Endothelial cell of umbilical vein (primary cell): ENCODE measurements at regions of chr11 and their contacts with region 1.

Region 1: DNA sequence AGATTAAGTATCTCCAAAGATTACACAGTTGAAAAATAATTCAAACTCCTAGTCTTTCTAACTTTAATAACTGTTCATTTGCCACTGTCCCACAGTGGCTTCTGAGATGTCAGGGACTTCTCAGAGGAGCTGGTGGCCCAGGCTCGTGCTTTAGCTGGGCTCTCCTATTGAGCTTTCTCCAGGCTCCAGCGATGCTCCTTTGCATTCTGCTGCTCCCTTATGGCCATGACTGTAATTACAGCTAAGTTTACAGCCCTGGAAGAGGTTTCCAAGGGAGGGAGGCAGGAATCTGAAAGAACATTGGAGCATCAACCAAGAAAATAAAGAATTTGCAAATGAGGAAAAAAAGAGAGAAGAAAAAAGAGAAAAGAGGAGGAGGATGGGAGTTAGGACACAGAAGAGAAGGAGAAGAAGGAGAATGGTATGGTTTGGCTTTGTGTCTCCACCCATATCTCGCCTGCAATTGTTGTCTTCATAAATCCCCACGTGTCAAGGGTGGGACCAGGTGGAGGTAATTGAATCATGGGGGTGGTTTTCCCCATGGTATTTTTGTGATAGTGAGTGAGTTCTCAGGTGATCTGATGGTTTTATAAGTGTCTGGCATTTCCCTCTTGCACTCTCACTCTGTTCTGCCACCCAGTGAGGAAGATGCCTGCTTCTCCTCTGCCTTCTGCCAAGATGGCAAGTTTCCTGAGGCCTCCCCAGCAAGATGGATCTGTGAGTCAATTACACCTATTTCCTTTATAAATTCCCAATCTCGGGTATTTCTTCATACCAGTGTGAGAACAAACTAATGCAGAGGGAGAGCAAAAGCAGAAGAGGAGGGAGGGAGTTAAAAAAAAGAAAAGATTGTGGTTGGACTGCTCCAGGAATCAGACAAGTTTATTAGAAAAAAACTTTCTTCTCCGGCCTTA is 857.0 kb downstream of the KCNA4 start:
- DNase-seq: peak; percentile 82
- H3K4me3 ChIP-seq: no peak overlapping the region
- H3K27ac ChIP-seq: peak overlapping the region; percentile 12
- H3K4me1 ChIP-seq: peaks cover 9% of the 10 kb centered on the region
- H3K27me3 ChIP-seq: no peaks in the 10 kb centered on the region
- CTCF ChIP-seq: peak; percentile 67 to 71
- POLR2A ChIP-seq: no peak

Region 2: DNA sequence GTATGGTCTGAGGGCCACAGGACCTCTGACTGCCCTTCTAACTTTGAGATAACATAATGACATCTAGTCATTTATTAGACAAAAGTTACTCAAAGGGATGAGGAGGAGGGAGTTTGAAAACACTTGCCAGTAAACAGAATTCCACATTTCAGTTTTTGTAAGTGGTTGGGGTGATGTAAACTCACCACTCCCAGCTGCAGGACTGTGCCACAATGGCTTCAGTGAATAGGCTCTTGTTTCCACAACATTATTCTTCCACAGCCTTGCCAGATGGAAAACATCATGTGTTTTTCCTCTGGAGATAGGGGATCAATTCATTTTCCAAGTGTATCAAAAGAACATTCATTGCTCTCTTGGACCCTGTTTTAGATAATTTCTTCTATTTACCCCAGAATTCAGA is 1312.3 kb before region 1 on chr11:
- CTCF ChIA-PET with region 1: no interaction called
- POLR2A ChIA-PET with region 1: no interaction called
- dilution Hi-C with region 1: no loop called
- intact Hi-C with region 1: loop called (anchors 10 kb)
- DNase-seq: no peak
- H3K4me3 ChIP-seq: no peak overlapping the region
- H3K27ac ChIP-seq: no peak overlapping the region
- H3K4me1 ChIP-seq: no peaks in the 10 kb centered on the region
- H3K27me3 ChIP-seq: peaks cover 7 to 10% of the 10 kb centered on the region in 2 experiments
- CTCF ChIP-seq: no peak
- POLR2A ChIP-seq: no peak

Region 3: GRCh38 chr11:28566339-28567089 is 593.3 kb before region 1 on chr11:
- CTCF ChIA-PET with region 1: no interaction called
- POLR2A ChIA-PET with region 1: no interaction called
- dilution Hi-C with region 1: no loop called
- intact Hi-C with region 1: loop called (anchors 10 kb)
- DNase-seq: peak; percentile 92
- H3K4me3 ChIP-seq: peak overlapping the region in 2 of 3 experiments; percentile 28 to 71
- H3K27ac ChIP-seq: peak overlapping the region; percentile 77
- H3K4me1 ChIP-seq: peaks cover 12% of the 10 kb centered on the region
- H3K27me3 ChIP-seq: no peaks in the 10 kb centered on the region
- CTCF ChIP-seq: no peak
- POLR2A ChIP-seq: no peak

Region 4: DNA sequence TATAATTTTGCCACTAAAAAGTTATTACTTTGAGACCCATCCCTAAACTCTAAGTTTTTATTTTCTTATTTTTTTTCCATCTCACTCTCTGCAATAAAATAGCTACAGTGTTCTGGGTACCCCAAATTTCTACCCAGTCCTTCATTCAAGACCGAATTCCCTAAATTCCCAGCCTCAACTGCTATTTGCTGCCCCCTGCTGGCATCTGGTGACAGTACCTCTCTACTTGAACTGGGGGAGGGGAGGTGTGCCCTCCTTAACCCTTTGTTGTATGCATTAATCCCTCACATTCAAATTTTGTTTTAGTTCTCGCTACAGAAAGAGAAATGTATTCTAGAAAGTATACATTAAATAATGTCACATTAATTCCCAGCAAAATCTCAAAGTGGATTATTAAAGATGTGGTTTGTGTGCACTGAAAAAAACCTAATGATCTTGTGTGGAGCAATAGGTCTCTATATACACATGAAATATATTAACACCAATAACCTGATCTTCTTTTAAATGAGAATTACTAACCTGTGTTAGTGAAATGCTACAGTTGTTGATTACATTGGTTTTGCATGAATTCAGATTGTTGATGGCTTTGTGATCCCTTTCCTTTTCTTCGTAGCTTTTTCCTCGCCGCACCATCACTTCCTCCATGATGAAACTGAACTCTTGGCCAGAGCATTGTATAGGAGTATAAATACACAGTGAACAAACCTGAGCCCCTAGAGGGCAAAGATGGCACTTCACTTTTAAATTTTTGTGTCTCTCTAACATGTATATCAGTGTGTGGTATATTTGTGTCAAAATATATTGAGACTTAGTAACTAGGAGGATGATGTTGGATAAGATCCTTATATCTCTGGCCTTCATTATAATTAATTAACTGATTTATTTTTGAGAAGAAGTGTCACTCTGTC is 461.6 kb before region 1 on chr11:
- CTCF ChIA-PET with region 1: interaction called, 18 read pairs
- POLR2A ChIA-PET with region 1: no interaction called
- dilution Hi-C with region 1: no loop called
- intact Hi-C with region 1: loop called (anchors 2 kb)
- DNase-seq: peak; percentile 60
- H3K4me3 ChIP-seq: no peak overlapping the region
- H3K27ac ChIP-seq: no peak overlapping the region
- H3K4me1 ChIP-seq: peaks cover 21% of the 10 kb centered on the region
- H3K27me3 ChIP-seq: no peaks in the 10 kb centered on the region
- CTCF ChIP-seq: peak; percentile 73 to 80
- POLR2A ChIP-seq: no peak

Region 5: DNA sequence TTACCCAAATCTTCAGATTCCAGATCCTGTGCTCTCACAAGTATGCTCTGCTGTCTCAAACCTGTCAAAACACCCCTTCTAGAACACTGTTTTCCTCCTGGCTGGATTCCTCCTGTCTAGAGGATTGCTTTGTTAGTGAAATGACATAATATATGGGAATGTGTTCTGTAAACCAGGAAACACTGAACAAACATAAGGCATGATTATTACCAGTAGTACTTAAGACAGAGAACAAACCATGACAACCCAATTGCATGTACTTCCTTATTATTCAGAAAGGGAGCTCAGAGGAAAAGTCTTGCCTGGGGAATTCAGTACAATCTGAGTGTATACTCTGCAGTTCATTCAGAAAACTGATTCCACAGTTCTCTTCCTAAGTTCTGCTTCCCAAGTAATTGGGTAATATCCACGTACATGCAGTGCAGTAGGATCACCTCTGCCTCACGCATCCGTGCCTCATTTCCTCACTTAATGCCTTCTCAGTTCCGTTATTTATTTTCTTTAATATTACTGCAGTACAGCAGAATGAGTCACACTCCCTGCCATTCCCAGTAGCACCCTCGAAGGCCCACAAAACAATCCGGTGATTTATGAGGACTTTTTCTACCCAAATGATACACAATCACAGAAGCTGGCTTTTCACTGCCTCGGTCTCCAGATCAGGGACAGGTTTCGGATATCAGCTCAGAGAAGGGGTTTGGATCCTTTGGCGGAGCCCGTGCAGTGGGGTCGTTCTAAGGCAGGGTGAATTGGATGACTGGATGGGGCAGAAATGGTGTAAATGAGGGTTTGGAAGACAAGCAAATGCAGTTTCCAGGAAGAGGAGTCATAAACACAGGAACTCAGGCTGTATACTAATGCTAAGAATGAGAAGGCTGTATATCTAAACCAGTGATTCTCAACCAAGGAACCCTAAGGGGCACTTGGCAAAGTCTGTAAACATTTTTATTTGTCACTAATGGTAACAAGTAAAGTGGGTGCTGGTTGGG is 39.8 kb before region 1 on chr11:
- CTCF ChIA-PET with region 1: interaction called, 22 read pairs
- POLR2A ChIA-PET with region 1: no interaction called
- dilution Hi-C with region 1: no loop called
- intact Hi-C with region 1: loop called (anchors 1 kb)
- DNase-seq: peak; percentile 99
- H3K4me3 ChIP-seq: peak overlapping the region in 2 of 3 experiments; percentile 25 to 62
- H3K27ac ChIP-seq: peak overlapping the region; percentile 100
- H3K4me1 ChIP-seq: peaks cover 33% of the 10 kb centered on the region
- H3K27me3 ChIP-seq: no peaks in the 10 kb centered on the region
- CTCF ChIP-seq: no peak
- POLR2A ChIP-seq: peak; percentile 74

Region 6: DNA sequence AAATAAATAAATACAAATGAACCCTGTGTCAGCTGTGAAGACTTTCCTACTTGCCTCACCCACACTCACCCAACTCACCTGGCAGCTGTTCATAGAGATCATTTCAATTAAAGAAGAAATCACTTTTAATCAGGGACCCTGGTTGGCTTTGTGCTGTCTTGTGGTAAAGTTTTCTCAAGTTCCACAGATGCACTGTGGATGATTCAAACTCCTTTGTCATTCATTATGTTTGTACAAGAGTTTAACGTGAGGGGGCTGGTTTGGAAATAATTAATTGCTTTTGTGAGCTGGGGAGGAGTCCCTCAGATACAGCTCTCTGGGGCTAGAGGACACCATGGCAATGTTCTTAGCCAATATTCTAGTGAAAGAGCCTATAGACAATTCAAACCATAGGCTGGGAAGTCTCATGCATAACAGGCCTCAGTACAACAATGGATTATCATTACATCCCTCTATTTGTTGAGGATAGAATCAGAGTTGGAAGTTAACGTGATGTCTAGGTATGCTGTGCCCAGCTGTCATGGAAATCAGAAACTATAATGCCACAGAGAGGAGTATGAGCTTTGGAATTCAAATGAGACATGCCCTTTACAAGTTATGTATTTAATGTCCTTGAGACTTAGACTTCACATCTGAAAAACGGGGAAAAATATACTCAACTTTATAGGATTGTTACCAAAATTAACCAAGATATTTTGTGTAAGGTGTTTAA is 158.5 kb after region 1 on chr11:
- CTCF ChIA-PET with region 1: no interaction called
- POLR2A ChIA-PET with region 1: no interaction called
- dilution Hi-C with region 1: no loop called
- intact Hi-C with region 1: no loop called
- DNase-seq: no peak
- H3K4me3 ChIP-seq: no peak overlapping the region
- H3K27ac ChIP-seq: no peak overlapping the region
- H3K4me1 ChIP-seq: no peaks in the 10 kb centered on the region
- H3K27me3 ChIP-seq: no peaks in the 10 kb centered on the region
- CTCF ChIP-seq: no peak
- POLR2A ChIP-seq: no peak

Region 7: DNA sequence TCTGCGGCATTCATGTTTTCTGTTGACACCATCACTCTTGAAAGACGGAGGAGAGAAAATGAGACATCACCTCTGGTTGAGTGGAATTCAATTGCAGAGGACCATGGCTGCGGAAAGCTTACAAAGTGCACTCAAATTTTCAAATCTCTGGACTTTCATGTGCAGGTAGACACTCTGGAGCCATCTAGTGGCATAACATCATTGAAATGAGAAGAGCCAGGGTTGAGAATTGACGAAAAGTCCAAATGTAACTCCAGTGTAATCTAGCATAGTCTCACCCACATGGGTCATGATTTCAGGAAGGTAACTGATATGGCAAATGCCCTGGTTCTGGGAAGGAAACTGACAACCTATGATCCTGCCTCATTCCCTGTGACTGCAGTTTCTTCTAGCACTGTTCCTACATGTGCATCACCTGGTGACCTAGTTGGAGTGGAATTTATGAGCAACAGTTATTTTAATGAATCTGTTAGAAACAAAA is 169.2 kb after region 1 on chr11:
- CTCF ChIA-PET with region 1: interaction called, 54 read pairs
- POLR2A ChIA-PET with region 1: no interaction called
- dilution Hi-C with region 1: no loop called
- intact Hi-C with region 1: loop called (anchors 2 kb)
- DNase-seq: peak; percentile 75
- H3K4me3 ChIP-seq: no peak overlapping the region
- H3K27ac ChIP-seq: no peak overlapping the region
- H3K4me1 ChIP-seq: peaks cover 7% of the 10 kb centered on the region
- H3K27me3 ChIP-seq: no peaks in the 10 kb centered on the region
- CTCF ChIP-seq: peak; percentile 63 to 66
- POLR2A ChIP-seq: no peak